ENCODE measurements at regions of chr1 and their contacts with region 1.

Region 1: GRCh38 chr1:66436378-66437145 is 97.4 kb upstream of the SGIP1 start:
- DNase-seq: peak; percentile 87
- ATAC-seq: peak; percentile 94
- H3K4me3 ChIP-seq: no peak overlapping the region
- H3K27ac ChIP-seq: peak overlapping the region; percentile 48
- H3K4me1 ChIP-seq: peaks cover 34% of the 10 kb centered on the region
- H3K27me3 ChIP-seq: no peaks in the 10 kb centered on the region
- CTCF ChIP-seq: peak; percentile 73

Region 2: GRCh38 chr1:66331657-66332547 is 104.7 kb before region 1 on chr1:
- CTCF ChIA-PET with region 1: interaction called, 7 read pairs
- POLR2A ChIA-PET with region 1: no interaction called
- intact Hi-C with region 1: loop called (anchors 5 kb)
- DNase-seq: peak; percentile 69
- ATAC-seq: peak; percentile 91
- H3K4me3 ChIP-seq: peak overlapping the region; percentile 66
- H3K27ac ChIP-seq: peak overlapping the region; percentile 86
- H3K4me1 ChIP-seq: peaks cover 26% of the 10 kb centered on the region
- H3K27me3 ChIP-seq: no peaks in the 10 kb centered on the region
- CTCF ChIP-seq: peak; percentile 20; the same call in 1 of the 2 replicates

Region 3: DNA sequence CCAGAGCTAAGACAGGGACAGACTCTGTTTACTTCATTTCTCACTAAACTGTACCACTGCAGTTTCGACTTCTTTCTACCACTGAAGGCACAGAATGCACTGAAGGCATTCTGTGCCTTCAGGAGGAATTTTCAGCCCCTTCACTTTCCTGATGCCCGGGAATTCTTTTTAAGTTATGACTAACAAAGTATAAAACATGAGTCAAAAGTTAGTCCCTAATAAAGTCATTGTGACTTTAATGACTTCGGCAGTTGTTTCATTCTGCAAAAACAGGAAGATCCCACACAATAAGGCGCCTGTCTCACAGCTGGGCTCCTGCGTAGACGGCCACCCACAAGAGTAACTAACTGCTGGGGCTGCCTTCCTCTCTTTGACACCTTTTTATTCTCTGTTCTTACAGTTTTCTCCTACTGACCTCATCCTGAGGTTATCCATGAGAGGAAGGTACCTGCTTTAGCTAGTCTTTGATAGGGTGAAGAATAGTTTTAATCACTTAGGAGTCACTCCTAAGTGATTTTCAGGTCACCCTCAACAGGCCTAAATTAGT is 86.5 kb before region 1 on chr1:
- CTCF ChIA-PET with region 1: no interaction called
- POLR2A ChIA-PET with region 1: interaction called, 3 read pairs
- intact Hi-C with region 1: loop called (anchors 5 kb)
- DNase-seq: peak; percentile 81
- ATAC-seq: peak; percentile 77
- H3K4me3 ChIP-seq: 0 out of 2 replicates have a peak overlapping the region, but pooled peaks have one; percentile 25
- H3K27ac ChIP-seq: peak overlapping the region; percentile 70
- H3K4me1 ChIP-seq: peaks cover 32% of the 10 kb centered on the region
- H3K27me3 ChIP-seq: no peaks in the 10 kb centered on the region
- CTCF ChIP-seq: no peak